PC-9 (cell line): ENCODE measurements at regions of chr10 and their contacts with region 1.

Region 1: GRCh38 chr10:93074147-93074596 is 479 bp downstream of the CYP26A1 start:
- DNase-seq: no peak
- H3K4me3 ChIP-seq: peak overlapping the region; percentile 53; the same call in 1 of the 2 replicates
- H3K27ac ChIP-seq: no peak overlapping the region
- H3K4me1 ChIP-seq: peaks cover 23% of the 10 kb centered on the region; the same call in 1 of the 2 replicates
- H3K27me3 ChIP-seq: no peaks in the 10 kb centered on the region
- CTCF ChIP-seq: no peak

Region 2: GRCh38 chr10:92886334-92886961 is 187.7 kb before region 1 on chr10:
- CTCF ChIA-PET with region 1: no interaction called
- POLR2A ChIA-PET with region 1: no interaction called
- intact Hi-C with region 1: loop called (anchors 5 kb)
- DNase-seq: no peak
- H3K4me3 ChIP-seq: no peak overlapping the region
- H3K27ac ChIP-seq: no peak overlapping the region
- H3K4me1 ChIP-seq: peaks cover 16% of the 10 kb centered on the region
- H3K27me3 ChIP-seq: no peaks in the 10 kb centered on the region
- CTCF ChIP-seq: no peak

Region 3: DNA sequence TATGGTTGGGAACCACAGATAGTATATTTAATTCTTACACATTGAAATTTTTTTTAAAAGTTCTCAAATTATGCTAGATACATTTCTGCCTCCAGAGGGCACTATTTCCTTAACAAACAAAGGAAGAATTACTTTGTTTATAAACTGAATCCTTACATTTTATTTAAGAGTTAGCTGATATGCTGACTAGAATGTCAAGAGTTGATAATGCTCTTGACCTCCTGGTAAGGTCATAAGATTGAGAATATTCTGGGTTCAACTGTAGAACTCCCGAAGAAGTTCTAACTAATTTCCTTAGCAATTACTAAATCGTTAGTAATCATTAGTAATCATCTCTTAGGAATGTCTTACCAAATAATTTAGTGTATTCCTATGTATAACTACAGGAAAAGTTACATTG is 108.9 kb before region 1 on chr10:
- CTCF ChIA-PET with region 1: no interaction called
- POLR2A ChIA-PET with region 1: interaction called, 19 read pairs
- intact Hi-C with region 1: no loop called
- DNase-seq: peak in 1 of 2 experiments; percentile 45
- H3K4me3 ChIP-seq: no peak overlapping the region
- H3K27ac ChIP-seq: no peak overlapping the region
- H3K4me1 ChIP-seq: no peaks in the 10 kb centered on the region
- H3K27me3 ChIP-seq: no peaks in the 10 kb centered on the region
- CTCF ChIP-seq: peak; percentile 84

Region 4: DNA sequence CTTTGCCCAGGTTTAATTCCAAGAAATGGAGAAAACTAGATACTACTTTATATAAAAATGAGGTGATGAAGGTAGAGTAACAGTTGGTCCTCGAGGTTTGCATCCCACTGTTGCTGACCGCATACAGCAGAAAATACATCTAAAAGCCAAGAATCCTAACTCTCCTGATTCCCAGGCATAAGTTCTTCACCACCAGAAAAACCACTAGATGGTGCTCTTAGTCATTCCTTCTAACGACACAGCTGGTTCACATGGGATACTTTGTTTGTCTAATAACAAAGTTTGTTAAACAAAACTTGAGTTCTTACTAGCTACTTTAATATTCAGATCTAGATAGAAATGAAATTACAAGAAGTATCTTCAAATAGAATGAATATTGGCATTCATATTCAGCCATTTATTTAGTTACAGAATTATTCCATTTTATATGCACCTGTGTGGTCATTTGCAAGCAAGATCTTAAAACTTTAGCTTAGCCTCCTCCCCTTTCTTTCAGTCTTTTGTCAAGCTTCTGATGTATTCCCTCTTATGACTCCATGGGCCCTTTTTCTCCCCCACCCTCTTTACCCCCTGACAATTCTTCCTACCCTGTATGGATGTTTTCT is 67.6 kb before region 1 on chr10:
- CTCF ChIA-PET with region 1: no interaction called
- POLR2A ChIA-PET with region 1: interaction called, 3 read pairs
- intact Hi-C with region 1: loop called (anchors 5 kb)
- DNase-seq: peak in 1 of 2 experiments; percentile 39
- H3K4me3 ChIP-seq: no peak overlapping the region
- H3K27ac ChIP-seq: no peak overlapping the region
- H3K4me1 ChIP-seq: no peaks in the 10 kb centered on the region
- H3K27me3 ChIP-seq: no peaks in the 10 kb centered on the region
- CTCF ChIP-seq: peak; percentile 57

Region 5: DNA sequence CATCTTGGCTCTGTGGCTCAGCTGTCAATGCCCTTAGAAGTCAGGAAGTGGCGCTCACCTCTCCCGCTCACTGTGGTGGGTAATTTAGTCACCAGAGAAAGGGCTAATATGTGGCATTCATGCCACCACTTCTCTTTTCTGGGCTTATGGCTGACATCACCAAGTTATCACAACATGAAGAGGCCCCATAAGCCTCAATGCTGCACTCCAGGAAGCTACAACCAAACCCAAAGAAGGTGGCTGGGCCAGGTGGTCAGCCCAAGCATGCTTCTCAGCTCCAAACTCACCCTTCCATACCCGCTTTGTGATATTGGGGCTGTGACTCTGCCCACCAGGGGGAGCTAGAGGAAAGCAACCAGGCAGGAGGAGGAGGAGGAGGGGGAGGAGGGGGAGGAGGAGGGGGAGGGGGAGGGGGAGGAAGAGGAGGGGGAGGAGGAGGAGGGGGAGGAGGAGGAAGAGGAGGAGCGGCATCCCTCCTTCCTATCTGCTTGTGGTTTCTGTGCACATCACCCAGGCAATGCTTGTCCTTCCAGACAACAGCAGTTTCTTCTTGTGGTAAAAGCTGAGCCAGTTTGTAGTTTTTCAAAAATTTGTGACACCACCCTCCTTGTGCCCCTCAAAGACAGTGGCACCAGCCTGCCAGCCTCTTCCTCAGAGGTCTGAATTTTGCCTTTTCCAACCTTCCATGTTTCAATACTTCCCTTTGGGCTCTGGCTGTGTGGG is 41.6 kb after region 1 on chr10:
- CTCF ChIA-PET with region 1: no interaction called
- POLR2A ChIA-PET with region 1: interaction called, 11 read pairs
- intact Hi-C with region 1: no loop called
- DNase-seq: peak in 1 of 2 experiments; percentile 53
- H3K4me3 ChIP-seq: no peak overlapping the region
- H3K27ac ChIP-seq: no peak overlapping the region
- H3K4me1 ChIP-seq: no peaks in the 10 kb centered on the region
- H3K27me3 ChIP-seq: no peaks in the 10 kb centered on the region
- CTCF ChIP-seq: peak; percentile 64

Region 6: DNA sequence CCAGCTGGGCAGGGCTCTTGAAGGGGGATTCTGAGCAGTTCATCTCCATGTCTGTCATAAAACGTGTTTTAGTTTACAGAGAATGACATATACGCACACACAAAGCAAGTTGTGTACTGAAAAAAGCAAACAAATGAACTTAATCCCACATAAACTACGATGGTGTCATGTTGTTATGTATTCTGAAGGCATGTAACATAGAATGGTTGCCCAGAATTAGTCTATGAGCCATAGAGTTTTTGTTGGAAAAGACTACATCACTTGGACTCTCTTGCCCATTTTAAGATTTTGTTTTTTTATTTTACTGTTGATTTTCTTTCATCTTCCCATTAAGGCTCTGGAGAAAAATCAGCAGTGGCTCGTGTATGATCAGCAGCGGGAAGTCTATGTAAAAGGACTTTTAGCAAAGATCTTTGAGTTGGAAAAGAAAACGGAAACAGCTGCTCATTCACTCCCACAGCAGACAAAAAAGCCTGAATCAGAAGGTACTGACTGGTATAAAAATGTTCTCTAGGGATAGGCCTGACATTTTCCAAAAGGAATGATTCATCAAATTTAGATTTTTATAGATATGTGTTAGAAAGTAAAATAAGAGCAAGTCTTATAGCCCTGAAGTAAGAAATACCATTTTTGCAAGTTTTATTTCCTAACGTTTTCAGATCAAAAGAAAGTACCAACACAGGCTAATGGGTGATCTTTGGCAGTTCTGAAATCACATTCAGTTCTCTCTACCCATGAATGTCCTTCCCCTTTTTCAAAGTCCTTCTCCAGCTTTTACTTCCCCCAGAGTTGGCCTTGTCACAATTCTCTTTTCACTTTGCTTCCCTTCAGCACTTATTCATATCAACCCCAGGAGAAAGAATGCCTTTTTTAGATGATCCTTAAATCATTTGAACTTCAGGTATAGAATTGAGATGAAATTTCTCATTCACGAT is 441.2 kb after region 1 on chr10:
- CTCF ChIA-PET with region 1: no interaction called
- POLR2A ChIA-PET with region 1: no interaction called
- intact Hi-C with region 1: loop called (anchors 10 kb)
- DNase-seq: no peak
- H3K4me3 ChIP-seq: no peak overlapping the region
- H3K27ac ChIP-seq: no peak overlapping the region
- H3K4me1 ChIP-seq: no peaks in the 10 kb centered on the region
- H3K27me3 ChIP-seq: no peaks in the 10 kb centered on the region
- CTCF ChIP-seq: no peak